Cardiac septum (tissue), 1 donor: ENCODE measurements at regions of chr11 and their contacts with region 1.

Region 1: GRCh38 chr11:13949876-13950275 is 12.6 kb upstream of the SPON1 start:
- DNase-seq: no peak

Region 2: DNA sequence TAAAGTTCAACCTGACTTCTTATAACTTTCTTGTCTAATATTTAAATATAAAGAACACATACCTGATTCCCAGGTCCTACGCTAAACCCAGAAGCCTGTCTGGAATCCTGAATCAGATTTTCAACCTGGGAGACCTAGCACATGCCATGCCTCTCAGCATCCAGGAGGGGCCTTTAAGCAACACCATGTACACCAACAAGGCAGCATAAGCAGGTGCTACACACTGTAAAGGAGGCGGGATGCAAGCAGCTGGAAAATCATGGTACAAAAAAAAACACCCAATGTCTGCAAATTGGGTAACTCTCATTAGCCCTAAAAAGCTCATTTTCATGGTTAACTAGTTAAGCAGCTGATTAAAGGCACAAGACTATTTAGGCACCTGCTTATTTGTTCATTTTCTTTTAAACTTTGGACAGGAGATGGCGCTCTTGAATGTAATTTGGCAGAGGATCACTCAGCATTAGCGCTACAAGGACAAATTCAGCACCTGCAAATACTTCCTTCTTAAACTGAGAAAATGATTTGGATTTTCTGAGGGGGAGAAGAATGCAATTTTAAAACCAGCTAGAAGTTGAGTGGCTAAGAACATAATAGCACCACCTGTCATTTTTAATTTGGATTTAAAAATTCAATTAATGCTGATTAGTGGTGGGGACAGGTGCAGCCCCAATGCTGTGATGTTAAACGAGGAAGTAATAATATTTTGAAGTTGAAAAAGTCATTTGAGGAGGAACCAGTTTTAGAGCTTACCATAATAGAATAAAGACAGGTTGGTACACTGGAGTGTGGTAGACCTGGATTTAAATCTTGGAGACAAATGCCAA is 177.4 kb before region 1 on chr11:
- intact Hi-C with region 1: loop called (anchors 5 kb)
- DNase-seq: no peak

Region 3: DNA sequence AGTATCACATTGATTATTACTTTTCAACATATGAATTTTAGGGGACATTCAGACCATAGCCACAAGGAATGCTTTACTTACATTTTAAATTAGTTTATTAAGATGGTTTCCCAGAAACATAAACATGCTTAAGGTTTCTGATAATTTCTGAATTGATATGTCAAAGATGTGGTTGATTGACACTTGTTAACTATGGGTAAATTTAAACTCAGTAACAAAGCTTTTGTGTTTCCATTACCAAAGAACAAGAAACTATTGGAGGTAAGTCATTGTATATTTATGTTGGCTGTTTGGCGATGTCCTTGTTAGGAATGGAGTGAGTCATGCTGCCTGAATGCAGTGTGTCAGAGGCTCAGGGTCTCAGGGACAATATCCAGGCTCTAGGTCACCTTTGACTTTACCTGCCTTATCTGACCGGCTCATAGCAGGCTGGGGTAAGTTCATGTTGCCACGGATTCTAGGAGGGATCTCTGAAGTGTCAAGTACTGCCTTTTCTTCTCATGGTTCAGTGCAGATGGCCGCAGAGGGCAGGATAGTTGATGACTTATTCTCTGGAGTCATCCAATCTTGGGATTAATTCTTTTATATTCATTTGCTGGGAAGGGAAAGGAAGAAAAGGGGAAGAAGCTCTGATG is 65.7 kb after region 1 on chr11:
- intact Hi-C with region 1: no loop called
- DNase-seq: no peak